ENCODE measurements at regions of chr19 and their contacts with region 1.

Region 1: DNA sequence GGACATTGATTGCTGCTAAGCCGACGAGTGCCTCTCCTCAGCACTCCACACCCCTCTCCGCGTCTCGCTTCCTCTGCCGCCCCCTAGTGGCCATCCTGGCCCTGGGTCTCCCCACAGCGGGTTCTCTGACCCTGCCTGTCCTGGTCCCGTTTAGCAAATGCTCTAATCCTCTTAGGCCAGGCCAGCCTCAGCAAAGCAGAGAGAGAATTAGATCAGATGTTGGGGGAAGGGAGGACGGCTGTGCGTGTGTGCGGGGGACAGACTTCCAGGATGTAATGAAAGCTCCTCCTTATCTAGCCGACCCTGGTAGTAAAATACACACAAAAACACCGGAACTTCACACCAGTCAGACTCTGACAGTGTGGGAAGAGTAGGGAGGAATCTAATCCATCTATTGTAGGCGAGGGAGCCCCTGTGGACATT is 4.5 kb downstream of the TPRX2 start:
- H3K4me3 ChIP-seq: no peak overlapping the region
- H3K27ac ChIP-seq: peak overlapping the region; percentile 46; the same call in 1 of the 2 replicates
- H3K4me1 ChIP-seq: 0 out of 2 replicates have a peak, but pooled peaks cover 4% of the 10 kb centered on the region
- CTCF ChIP-seq: peak; percentile 88

Region 2: DNA sequence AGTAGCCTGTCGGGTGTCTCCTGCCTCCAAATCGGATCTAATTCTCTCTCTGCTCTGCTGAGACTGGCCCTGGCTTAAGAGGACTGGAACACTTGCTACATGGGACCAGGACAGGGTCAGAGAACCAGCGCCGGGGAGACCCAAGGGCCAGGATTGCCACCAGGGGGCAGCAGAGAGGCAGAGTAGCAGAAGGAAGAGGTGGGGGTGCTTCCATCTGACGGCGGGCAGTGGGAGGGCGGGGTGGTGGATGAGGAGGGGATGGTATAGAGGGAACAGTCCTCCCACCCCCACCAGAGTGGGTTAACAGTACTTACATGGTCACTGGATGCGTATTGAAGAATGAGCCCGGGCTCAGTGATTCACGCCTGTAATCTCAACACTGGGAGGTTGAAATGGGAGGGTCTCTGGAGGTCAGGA is 73.1 kb before region 1 on chr19:
- CTCF ChIA-PET with region 1: interaction called, 40 read pairs
- POLR2A ChIA-PET with region 1: no interaction called
- H3K4me3 ChIP-seq: no peak overlapping the region
- H3K27ac ChIP-seq: no peak overlapping the region
- H3K4me1 ChIP-seq: no peaks in the 10 kb centered on the region
- CTCF ChIP-seq: peak; percentile 85

Region 3: GRCh38 chr19:47805313-47805712 is 58.2 kb before region 1 on chr19:
- CTCF ChIA-PET with region 1: interaction called, 12 read pairs
- POLR2A ChIA-PET with region 1: no interaction called
- H3K4me3 ChIP-seq: no peak overlapping the region
- H3K27ac ChIP-seq: no peak overlapping the region
- H3K4me1 ChIP-seq: no peaks in the 10 kb centered on the region
- CTCF ChIP-seq: no peak

Region 4: DNA sequence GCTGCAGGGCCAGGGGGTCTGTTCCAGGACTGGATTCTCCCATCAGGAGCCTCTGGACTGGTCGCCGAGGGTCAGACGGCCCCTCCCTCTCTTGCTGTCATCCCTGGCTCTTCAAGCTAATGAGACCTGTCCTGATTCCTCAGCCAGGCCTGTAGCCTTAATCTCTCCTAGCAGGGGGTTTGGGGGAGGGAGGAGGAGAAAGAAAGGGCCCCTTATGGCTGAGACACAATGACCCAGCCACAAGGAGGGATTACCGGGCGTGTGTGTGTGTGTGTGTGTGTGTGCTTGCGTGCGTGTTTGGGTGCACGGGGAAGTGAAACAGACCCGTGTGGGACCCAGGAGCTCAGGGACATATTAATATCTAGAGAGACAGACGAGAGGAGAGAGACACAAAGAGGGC is 43.7 kb before region 1 on chr19:
- CTCF ChIA-PET with region 1: interaction called, 45 read pairs
- POLR2A ChIA-PET with region 1: no interaction called
- H3K4me3 ChIP-seq: no peak overlapping the region
- H3K27ac ChIP-seq: no peak overlapping the region
- H3K4me1 ChIP-seq: no peaks in the 10 kb centered on the region
- CTCF ChIP-seq: no peak

Region 5: DNA sequence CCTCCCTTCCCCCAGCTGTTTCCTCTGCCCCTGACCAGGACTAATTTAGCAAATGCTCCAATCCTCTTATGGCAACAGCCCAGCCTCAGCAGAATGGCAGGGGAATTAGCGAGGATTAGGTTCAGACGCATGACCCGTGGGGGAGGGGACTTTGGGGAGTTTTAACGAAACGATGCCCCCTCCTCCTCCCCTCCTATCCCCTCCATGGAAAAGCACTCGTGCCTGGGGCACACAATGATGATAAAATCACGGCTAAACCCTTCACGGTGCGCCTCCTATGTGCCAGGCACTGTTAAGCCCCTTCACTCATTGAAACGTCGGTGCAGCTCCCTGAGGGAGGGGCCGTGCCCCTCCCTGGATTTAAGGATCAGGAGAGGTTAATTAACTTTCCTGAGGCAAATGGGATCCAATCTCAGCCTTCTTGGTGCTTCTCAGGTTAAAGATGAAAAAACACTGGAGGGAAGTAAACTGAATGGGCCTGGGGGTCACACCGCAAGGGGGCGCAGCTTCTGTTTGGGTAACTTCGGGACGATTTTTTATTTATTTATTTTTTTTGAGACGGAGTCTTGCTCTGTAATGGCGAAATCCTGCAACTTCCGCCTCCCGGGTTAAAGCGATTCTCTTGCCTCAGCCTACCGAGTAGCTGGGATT is 14.6 kb before region 1 on chr19:
- CTCF ChIA-PET with region 1: interaction called, 28 read pairs
- POLR2A ChIA-PET with region 1: interaction called, 3 read pairs
- H3K4me3 ChIP-seq: no peak overlapping the region
- H3K27ac ChIP-seq: 0 out of 2 replicates have a peak overlapping the region, but pooled peaks have one; percentile 37
- H3K4me1 ChIP-seq: no peaks in the 10 kb centered on the region
- CTCF ChIP-seq: no peak; the same call in 1 of the 2 replicates

Region 6: DNA sequence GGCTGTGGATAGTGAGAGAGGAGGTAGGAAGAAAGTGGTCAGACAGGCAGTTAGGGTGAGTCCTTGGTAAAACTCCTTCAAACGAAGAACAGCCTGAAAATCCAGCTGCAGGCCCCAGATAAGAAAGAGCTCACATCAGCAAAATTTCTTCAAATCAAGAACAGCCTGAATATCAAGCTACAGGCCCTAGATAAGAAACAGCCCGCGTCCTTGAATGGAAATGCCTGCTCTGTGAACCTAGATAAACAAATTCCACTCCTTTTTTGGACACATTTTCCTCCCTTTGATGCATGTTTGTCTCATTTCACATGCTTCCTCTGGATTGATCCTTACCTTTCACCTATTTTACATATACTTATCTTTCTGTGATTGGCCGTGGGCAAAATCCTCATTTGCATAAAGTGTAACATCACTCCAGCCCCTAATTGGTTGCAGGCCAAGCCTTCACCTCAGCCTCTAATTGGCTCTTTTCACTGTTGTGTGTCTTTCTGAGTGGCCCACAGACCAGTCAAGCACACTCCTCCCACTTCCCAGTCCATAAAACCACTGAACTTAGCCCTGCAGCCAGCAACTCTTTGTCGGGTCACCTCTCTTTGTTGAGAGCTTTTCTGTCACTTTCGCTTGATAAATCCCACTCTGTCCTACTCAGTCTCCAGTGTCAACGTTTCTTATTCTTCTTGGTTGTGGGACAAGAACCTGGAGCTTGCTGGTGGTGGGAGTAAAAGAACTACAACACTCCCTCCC is 28.6 kb after region 1 on chr19:
- CTCF ChIA-PET with region 1: interaction called, 13 read pairs
- POLR2A ChIA-PET with region 1: no interaction called
- H3K4me3 ChIP-seq: no peak overlapping the region
- H3K27ac ChIP-seq: peak overlapping the region; percentile 1; the same call in 1 of the 2 replicates
- H3K4me1 ChIP-seq: no peaks in the 10 kb centered on the region
- CTCF ChIP-seq: no peak